OCI-LY7 (cell line): ENCODE measurements at regions of chr14 and their contacts with region 1.

Region 1: GRCh38 chr14:77376771-77377501 is at the starts of genes SAMD15 and TMED8:
- DNase-seq: peak; percentile 87
- H3K4me3 ChIP-seq: peak within 1 kb of the TSS; percentile 87
- H3K27ac ChIP-seq: peak within 1 kb of the TSS; percentile 96
- H3K4me1 ChIP-seq: peaks cover 32% of the 10 kb centered on the region
- CTCF ChIP-seq: peak; percentile 31; the same call in 1 of the 2 replicates
- total RNA-seq, gene SAMD15: 1.1 and 1.6 TPM in 2 replicates
- total RNA-seq, gene TMED8: 19.5 and 21.9 TPM in 2 replicates

Region 2: DNA sequence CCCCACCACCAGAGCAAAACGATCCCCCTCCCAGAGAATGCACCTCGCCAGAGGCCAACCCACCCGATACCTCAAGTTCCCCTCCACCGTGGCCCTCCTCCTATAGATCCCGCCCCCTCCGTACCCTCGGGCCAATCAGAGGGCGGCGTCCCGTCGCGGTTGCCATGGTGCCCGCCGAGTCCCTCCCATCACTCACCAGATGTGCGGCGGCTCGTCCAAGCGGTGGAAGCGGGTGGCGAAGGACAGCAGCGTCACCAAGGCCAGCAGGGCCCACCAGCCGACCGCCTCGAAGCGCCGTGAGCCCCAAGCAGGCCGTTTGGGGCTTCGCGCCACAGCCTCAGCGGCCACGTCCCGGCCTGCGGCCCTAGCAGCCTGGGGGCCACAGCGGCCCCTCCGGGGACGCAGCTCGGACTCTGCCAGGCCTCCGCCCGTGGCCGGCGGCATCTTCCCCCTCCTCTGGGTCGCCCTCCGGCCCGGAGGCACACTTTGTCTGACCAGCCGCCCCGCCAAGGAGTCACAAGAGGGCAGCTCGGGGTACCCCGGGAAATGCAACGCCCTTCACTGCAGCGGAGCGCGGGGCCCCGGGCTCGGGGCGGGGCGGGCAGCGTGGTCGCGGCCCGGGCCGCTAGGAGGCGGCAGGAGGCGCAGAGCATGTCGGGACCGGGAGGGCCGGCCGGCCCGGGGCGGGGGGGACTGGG is 56.5 kb before region 1 on chr14 and contains the start of gene POMT2:
- CTCF ChIA-PET with region 1: interaction called, 4 read pairs
- POLR2A ChIA-PET with region 1: interaction called, 8 read pairs
- intact Hi-C with region 1: loop called (anchors 1 kb)
- DNase-seq: peak; percentile 92
- H3K4me3 ChIP-seq: peak within 1 kb of the TSS; percentile 81
- H3K27ac ChIP-seq: peak within 1 kb of the TSS; percentile 80
- H3K4me1 ChIP-seq: peaks cover 25% of the 10 kb centered on the region
- CTCF ChIP-seq: peak; percentile 51; the same call in 1 of the 2 replicates
- total RNA-seq, gene POMT2: 5.9 and 8.2 TPM in 2 replicates

Region 3: DNA sequence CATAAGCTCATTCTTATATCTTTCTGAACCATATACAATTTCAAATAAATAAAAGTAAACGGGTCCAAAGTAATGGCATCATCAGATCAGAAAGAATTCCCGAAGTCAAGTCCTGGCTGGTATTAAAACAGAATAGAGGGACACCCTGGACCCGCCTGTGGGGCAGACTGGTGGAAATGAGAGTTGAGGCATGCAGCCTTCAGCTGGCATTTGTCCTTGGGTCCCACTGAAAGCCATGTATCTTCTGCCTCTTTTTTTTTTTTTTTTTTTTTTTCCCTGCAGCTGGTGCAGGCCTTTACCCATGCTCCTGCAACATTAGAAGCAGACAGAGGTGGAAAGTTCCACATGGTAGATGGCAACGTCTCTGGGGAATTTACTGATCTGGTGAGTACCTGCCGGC is 90.9 kb after region 1 on chr14:
- CTCF ChIA-PET with region 1: no interaction called
- POLR2A ChIA-PET with region 1: no interaction called
- intact Hi-C with region 1: no loop called
- DNase-seq: no peak
- H3K4me3 ChIP-seq: no peak overlapping the region
- H3K27ac ChIP-seq: no peak overlapping the region
- H3K4me1 ChIP-seq: no peaks in the 10 kb centered on the region
- CTCF ChIP-seq: no peak